Naive thymus-derived CD4-positive, alpha-beta T cell (primary cell): ENCODE measurements at regions of chr1 and their contacts with region 1.

Region 1: DNA sequence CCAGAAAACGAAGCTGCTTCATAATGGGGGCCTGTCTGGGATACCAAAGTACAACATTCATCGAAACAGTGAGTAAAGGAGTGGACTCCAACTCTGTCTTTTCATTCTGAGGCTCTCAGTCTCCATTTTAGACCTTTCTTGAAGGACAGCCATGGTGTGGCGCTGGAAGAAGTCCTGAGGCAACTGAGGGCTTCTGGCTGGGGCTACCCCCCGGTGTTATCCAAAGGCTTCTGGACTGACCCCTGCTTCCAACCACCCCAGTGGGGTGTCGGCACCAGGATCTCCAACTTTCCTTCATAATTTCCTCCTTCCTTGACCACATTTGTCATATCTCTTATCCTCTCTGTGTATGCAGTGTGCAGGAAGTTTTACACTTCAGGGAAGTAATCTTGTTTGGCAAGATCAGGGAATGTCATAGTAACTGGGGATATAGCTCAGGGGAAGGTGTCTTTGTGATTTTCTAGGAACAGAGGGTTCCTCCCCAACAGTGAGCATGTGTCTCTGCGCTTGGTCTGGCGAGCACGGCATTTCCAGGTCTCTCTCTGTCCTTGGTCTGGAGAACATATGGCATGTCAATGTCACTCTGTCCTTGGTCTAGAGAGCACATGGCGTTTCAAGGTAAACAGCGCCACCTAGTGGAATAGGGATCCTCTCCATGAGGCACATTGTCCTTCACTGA is 19.4 kb upstream of the BSDC1 start:
- DNase-seq: peak; percentile 27 to 78 (median 70)
- ATAC-seq: peak; percentile 90
- H3K4me3 ChIP-seq: no peak overlapping the region
- H3K4me3 Mint-ChIP-seq: no peak overlapping the region
- H3K27ac ChIP-seq: no peak overlapping the region
- H3K27ac Mint-ChIP-seq: peak overlapping the region in 3 of 9 donors; percentile 8 to 26 (median 21)
- H3K4me1 ChIP-seq: no peaks in the 10 kb centered on the region
- H3K4me1 Mint-ChIP-seq: peaks cover 0 to 3% (median 0%) of the 10 kb centered on the region in 7 donors
- H3K27me3 ChIP-seq: peaks cover 0 to 6% of the 10 kb centered on the region in 2 donors
- H3K27me3 Mint-ChIP-seq: peaks cover 4 to 40% (median 8%) of the 10 kb centered on the region in 5 donors

Region 2: GRCh38 chr1:32400876-32401631 is 12.6 kb before region 1 on chr1:
- CTCF ChIA-PET with region 1: interaction called, 13 read pairs
- POLR2A ChIA-PET with region 1: no interaction called
- intact Hi-C with region 1: loop called (anchors 1 kb)
- DNase-seq: peak in 8 of 9 donors; percentile 25 to 61 (median 34)
- ATAC-seq: peak; percentile 79
- H3K4me3 ChIP-seq: no peak overlapping the region
- H3K4me3 Mint-ChIP-seq: peak overlapping the region in 2 of 10 donors; percentile 21 to 31
- H3K27ac ChIP-seq: no peak overlapping the region
- H3K27ac Mint-ChIP-seq: no peak overlapping the region
- H3K4me1 ChIP-seq: no peaks in the 10 kb centered on the region
- H3K4me1 Mint-ChIP-seq: peaks cover 0 to 5% (median 4%) of the 10 kb centered on the region in 7 donors
- H3K27me3 ChIP-seq: no peaks in the 10 kb centered on the region
- H3K27me3 Mint-ChIP-seq: peaks cover 0 to 20% (median 0%) of the 10 kb centered on the region in 5 donors